Stomach (tissue), 19 donors: ENCODE measurements at regions of chr9 and their contacts with region 1.

Region 1: DNA sequence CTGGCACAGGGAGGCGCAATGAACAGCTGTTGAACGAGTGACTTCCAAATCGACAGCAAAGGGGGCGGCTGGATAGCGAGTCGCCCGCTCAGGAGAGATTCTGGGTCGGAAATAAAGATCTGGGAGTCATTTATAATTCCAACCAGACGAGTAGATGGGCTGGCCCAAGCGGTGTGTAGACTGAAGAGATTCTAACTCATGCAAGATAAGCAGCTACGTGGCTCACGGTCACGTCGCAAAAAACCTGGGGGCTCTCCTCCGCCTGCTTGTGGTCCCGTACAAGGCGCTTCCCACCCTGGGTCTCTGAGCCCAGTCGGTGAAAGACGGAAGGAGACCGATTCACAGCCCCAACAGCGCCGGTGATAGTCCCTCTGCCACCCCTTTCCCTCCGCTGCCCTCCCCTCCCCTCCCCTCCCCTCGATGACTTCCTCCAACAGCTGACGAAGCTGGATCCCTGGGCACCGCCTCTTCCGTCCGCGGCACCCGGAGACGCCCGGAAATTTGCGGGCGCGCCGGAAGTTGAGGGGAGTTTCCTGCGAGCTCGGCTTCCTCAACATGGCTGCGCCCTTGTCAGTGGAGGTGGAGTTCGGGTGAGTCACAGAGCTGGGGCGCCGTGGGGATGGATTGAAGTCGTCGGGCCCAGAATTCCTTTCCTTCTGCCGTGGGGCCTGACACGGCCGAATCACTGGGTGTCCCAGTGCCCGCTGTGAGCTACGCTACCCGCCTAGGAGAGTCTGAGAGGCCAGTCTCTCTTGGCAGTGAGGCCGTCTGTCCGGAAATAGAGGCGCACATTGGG is at the start of gene URM1:
- DNase-seq: peak; percentile 96 to 99
- H3K4me3 ChIP-seq: peak within 1 kb of the TSS; percentile 65 to 92 (median 78)
- H3K27ac ChIP-seq: peak within 1 kb of the TSS; percentile 91 to 95 (median 92)
- H3K4me1 ChIP-seq: peaks cover 20 to 40% (median 32%) of the 10 kb centered on the region in 4 donors
- H3K27me3 ChIP-seq: no peaks in the 10 kb centered on the region
- CTCF ChIP-seq: no peak
- EP300 ChIP-seq: no peak
- POLR2A ChIP-seq: peak in 2 of 4 donors; percentile 86 to 89
- total RNA-seq, gene URM1: 0.58 to 28.3 (median 10.1) TPM

Region 2: DNA sequence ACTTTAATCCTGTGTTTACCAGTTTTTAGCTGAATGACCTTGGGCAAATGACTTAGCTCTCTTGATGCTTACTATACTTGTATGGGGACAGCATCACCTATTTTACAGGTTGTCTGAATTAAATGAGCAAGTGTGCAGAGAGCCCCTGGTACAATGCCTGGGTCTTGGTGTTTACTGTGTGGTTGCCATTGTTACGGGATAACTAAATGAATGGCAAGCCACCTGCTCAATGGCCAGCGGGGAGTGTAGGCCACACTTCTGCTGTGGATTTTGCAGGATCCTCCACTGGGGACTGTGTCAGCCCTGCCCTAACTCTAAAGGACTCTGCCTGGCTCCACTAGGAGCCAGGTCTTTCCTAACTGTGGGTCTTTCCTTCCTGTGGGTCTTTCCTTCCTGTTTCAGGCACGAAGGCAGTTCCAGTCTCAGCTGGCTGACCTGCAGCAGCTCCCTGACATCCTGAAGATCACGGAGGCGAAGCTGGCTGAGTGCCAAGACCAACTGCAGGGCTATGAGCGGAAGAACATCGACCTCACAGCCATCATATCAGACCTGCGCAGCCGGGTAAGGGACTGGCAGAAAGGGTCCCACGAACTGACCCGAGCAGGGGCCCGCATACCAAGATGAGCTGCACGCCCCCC is 123.2 kb after region 1 on chr9:
- intact Hi-C with region 1: loop called (anchors 10 kb)
- DNase-seq: peak; percentile 42 to 87
- H3K4me3 ChIP-seq: no peak overlapping the region
- H3K27ac ChIP-seq: peak overlapping the region in 1 of 5 donors; percentile 26
- H3K4me1 ChIP-seq: peaks cover 0 to 10% (median 3%) of the 10 kb centered on the region in 4 donors
- H3K27me3 ChIP-seq: no peaks in the 10 kb centered on the region
- CTCF ChIP-seq: no peak
- EP300 ChIP-seq: no peak
- POLR2A ChIP-seq: no peak